Heart left ventricle (tissue), 16 donors: ENCODE measurements at regions of chr17 and their contacts with region 1.

Region 1: DNA sequence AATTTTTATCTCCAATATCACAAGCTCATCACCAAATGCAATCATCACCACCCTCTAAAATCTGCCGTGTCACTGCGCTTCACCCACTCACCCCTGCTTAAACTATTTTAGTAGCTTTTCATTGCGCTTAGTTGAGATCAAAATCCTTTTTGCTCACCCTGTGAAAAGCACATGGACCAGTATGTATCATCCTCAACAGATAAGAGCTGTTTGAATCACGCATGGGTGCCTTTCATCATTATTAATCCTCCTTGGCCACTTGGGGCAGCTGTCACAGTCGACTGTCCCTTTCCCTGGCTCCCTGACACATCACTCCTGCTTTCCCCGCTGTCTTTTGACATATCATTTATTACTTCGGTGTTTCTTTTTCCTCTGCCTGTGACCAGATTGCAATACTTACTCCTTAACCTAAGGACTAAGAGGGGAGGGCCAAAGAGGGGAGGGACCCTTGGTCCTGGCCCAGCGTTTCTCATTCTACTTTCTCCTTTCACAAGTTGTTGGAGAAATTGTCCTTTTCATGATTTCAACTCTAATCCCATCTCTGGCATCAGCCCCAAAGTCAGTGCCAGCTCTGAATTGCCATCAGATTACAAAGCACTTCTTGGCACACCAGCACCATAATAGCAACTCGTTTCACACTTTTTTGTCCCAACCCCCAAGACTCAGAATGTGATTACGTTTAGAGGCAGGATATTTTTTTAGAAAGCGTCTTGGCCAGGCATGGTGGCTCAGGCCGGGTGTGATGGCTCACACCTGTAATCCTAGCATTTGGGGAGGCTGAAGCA is 8.6 kb upstream of the KDM6B start:
- DNase-seq: no peak
- ATAC-seq: no peak
- H3K4me3 ChIP-seq: no peak overlapping the region
- H3K27ac ChIP-seq: no peak overlapping the region
- H3K4me1 ChIP-seq: no peaks in the 10 kb centered on the region
- H3K27me3 ChIP-seq: no peaks in the 10 kb centered on the region
- CTCF ChIP-seq: peak in 1 of 12 donors; percentile 15
- POLR2A ChIP-seq: no peak

Region 2: DNA sequence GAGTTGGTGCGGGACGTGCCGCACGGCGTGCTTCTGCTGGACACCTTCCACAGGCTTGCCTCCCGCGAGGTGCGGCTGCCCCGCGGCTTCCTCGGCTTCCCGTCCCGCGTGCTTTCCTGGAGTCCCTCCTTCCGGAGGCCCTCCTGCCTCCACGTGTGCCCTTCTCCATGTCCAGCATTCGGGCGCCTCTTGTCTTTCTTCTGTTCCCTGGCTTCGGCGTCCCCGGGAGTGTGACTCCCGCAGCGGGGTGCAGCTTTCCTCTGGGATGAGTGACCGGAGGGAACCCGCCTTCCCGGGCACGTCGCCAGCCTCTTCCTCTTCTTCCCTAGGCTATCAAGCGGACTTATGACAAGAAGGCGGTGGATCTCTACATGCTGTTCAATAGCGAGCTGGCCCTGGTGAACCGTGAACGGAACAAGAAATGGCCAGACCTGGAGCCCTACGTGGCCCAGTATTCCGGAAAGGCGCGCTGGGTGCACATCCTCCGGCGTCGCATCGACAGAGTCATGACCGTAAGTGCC is 84.9 kb before region 1 on chr17:
- intact Hi-C with region 1: loop called in 5 of 10 experiments (anchors 2 to 10 kb)
- DNase-seq: no peak
- ATAC-seq: peak in 1 of 4 donors; percentile 30
- H3K4me3 ChIP-seq: peak overlapping the region in 8 of 12 donors; percentile 12 to 35 (median 24)
- H3K27ac ChIP-seq: no peak overlapping the region
- H3K4me1 ChIP-seq: peaks cover 0 to 13% (median 0%) of the 10 kb centered on the region in 12 donors
- H3K27me3 ChIP-seq: peaks cover 0 to 13% (median 4%) of the 10 kb centered on the region in 9 donors
- CTCF ChIP-seq: no peak
- POLR2A ChIP-seq: no peak

Region 3: GRCh38 chr17:7755095-7755890 is 70.1 kb before region 1 on chr17:
- intact Hi-C with region 1: no loop called
- DNase-seq: no peak
- ATAC-seq: no peak
- H3K4me3 ChIP-seq: no peak overlapping the region
- H3K27ac ChIP-seq: no peak overlapping the region
- H3K4me1 ChIP-seq: no peaks in the 10 kb centered on the region
- H3K27me3 ChIP-seq: no peaks in the 10 kb centered on the region
- CTCF ChIP-seq: no peak
- POLR2A ChIP-seq: no peak

Region 4: DNA sequence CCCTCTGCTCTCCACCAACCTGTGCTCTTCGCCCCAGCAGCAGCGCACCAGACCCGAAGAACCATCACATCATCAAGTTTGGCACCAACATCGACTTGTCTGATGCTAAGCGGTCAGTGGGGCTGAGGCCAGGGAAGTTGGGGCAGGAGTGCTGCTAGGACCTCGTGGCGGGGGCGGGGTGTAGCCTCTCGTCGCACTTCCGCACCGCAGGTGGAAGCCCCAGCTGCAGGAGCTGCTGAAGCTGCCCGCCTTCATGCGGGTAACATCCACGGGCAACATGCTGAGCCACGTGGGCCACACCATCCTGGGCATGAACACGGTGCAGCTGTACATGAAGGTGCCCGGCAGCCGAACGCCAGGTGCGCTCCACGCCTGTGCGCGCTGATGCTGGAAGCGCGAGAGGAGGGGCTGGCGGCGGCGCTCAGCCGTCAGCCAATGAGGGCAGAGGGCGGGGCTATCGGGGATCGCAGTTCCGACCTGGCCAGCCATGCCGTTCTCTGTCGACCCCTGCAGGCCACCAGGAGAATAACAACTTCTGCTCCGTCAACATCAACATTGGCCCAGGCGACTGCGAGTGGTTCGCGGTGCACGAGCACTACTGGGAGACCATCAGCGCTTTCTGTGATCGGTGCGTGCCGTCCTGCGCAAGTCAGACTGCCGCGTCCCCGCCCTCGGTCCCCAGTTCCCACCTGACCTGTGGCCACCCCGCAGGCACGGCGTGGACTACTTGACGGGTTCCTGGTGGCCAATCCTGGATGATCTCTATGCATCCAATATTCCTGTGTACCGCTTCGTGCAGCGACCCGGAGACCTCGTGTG is 26.2 kb after region 1 on chr17:
- intact Hi-C with region 1: loop called in 6 of 10 experiments (anchors 1 to 5 kb)
- DNase-seq: peak; percentile 92 to 95 (median 93)
- ATAC-seq: peak; percentile 57 to 78 (median 72)
- H3K4me3 ChIP-seq: peak overlapping the region in 4 of 12 donors; percentile 16 to 42 (median 22)
- H3K27ac ChIP-seq: peak overlapping the region in 8 of 12 donors; percentile 18 to 91 (median 37)
- H3K4me1 ChIP-seq: peaks cover 0 to 40% (median 24%) of the 10 kb centered on the region in 12 donors
- H3K27me3 ChIP-seq: no peaks in the 10 kb centered on the region
- CTCF ChIP-seq: peak; percentile 97 to 99 (median 99)
- POLR2A ChIP-seq: peak in 1 of 2 donors; percentile 21

Region 5: GRCh38 chr17:7862692-7863437 is 37.5 kb after region 1 on chr17:
- intact Hi-C with region 1: loop called in 2 of 10 experiments (anchors 5 kb)
- DNase-seq: peak in 1 of 5 donors; percentile 49
- ATAC-seq: no peak
- H3K4me3 ChIP-seq: no peak overlapping the region
- H3K27ac ChIP-seq: no peak overlapping the region
- H3K4me1 ChIP-seq: peaks cover 0 to 20% (median 13%) of the 10 kb centered on the region in 12 donors
- H3K27me3 ChIP-seq: no peaks in the 10 kb centered on the region
- CTCF ChIP-seq: peak; percentile 69 to 90 (median 83)
- POLR2A ChIP-seq: no peak

Region 6: GRCh38 chr17:7903154-7904103 is 78.0 kb after region 1 on chr17:
- intact Hi-C with region 1: loop called in 6 of 10 experiments (anchors 5 to 10 kb)
- DNase-seq: no peak
- ATAC-seq: no peak
- H3K4me3 ChIP-seq: no peak overlapping the region
- H3K27ac ChIP-seq: no peak overlapping the region
- H3K4me1 ChIP-seq: no peaks in the 10 kb centered on the region
- H3K27me3 ChIP-seq: no peaks in the 10 kb centered on the region
- CTCF ChIP-seq: no peak
- POLR2A ChIP-seq: no peak